Adrenal gland (tissue), 19 donors: ENCODE measurements at regions of chr15 and their contacts with region 1.

Region 1: DNA sequence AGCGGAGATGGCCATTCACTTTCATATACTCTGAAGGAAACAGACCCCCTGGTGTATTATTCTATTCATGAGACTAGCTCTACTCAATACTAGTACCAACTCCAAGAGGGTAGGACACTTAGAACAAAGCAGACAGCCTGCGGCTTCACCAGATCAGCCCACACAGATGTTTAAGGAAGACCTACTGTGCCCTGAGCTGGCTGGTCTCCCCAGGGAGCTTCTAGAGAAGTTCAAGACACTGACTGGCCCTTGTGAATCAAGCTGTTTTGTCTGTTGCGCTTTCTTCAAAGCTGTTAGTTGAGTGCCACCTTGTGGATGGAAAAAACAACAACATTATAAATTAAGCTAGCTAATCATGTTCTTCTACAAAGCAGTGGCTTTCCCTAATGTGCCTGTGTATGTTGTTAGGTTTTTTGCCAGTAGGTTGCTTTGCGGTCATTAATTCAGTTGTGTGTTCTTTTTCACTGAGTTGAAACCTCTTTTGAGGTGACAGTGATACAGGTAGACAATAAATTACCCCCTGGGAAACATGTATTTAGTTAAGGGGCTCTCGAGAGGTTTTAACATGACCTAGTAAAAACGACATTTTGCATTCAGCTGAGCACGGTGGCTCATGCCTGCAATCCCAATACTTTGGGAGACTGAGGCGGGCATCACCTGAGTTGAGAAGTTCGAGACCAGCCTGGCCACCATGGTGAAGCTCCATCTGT is 64.2 kb upstream of the MYZAP start:
- DNase-seq: peak; percentile 42 to 75 (median 59)
- H3K4me3 ChIP-seq: no peak overlapping the region
- H3K27ac ChIP-seq: no peak overlapping the region
- H3K4me1 ChIP-seq: peaks cover 18 to 21% of the 10 kb centered on the region in 2 donors
- H3K27me3 ChIP-seq: no peaks in the 10 kb centered on the region
- CTCF ChIP-seq: peak; percentile 38 to 83 (median 78)
- POLR2A ChIP-seq: no peak

Region 2: DNA sequence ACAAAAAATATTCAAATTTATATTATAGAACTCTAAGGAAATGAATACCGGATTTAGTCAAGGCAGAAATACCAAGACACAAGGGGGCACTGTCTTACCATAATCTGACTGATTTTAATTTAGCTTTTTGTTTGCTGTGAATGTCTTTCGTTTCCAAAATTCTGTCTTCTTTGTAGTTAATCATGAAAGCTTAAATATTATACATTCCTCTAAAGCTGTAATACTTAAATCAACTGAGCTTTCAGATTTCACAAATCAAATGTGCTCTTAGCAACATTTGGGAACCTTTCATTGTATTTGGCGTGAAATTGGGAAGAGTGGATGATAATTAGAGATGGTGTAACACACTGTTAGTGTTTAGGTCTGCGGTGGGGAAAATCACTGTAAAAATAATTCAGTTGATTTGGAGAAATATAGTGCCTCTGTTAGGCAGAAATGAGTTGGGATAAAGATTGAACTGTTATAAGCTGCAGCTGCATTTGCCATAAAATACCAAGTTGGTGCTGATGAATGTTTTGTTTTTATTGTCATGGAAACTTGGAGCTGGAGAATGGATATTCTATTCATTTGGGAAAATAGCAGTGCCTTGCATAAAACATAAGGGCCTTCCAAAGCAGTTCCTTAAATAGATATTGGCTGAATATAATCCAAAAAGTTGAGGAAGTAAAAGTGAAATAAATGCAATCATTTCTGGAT is 380.9 kb before region 1 on chr15:
- intact Hi-C with region 1: loop called in 1 of 2 experiments (anchors 10 kb)
- DNase-seq: peak in 1 of 7 donors; percentile 25
- H3K4me3 ChIP-seq: peak overlapping the region in 1 of 4 donors; percentile 13
- H3K27ac ChIP-seq: peak overlapping the region in 1 of 5 donors; percentile 17
- H3K4me1 ChIP-seq: peaks cover 8 to 35% of the 10 kb centered on the region in 2 donors
- H3K27me3 ChIP-seq: no peaks in the 10 kb centered on the region
- CTCF ChIP-seq: peak; percentile 64 to 84 (median 68)
- POLR2A ChIP-seq: no peak

Region 3: DNA sequence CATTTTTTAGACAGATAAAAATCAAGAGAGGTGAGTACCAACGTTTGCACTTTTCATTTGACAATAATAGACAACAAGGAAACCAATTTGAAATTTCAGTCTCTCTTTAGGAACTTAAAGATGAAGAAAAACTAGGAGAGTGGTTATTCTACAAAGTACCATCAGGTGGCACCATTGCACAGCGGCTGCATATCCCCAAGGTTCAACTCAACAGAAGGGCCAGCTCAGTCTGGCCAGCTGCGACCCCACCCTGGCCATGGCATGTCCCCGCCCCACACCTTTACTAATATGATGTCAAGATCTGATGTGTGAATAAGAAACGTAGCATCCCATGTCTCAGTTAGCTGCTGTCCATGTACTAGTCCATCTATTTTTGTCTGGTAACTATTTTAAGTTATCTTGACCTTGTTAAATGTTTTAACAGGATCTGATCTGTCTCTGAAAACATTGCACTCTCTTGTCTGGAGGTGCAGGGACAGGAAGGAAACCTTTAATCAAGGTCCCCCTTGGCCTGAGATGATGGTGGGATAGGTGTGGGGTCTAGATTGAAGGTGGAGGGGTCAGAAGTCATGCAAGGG is 186.8 kb before region 1 on chr15:
- intact Hi-C with region 1: loop called (anchors 2 to 5 kb)
- DNase-seq: peak in 6 of 7 donors; percentile 43 to 75 (median 58)
- H3K4me3 ChIP-seq: no peak overlapping the region
- H3K27ac ChIP-seq: no peak overlapping the region
- H3K4me1 ChIP-seq: no peaks in the 10 kb centered on the region
- H3K27me3 ChIP-seq: no peaks in the 10 kb centered on the region
- CTCF ChIP-seq: peak; percentile 74 to 95 (median 86)
- POLR2A ChIP-seq: no peak

Region 4: DNA sequence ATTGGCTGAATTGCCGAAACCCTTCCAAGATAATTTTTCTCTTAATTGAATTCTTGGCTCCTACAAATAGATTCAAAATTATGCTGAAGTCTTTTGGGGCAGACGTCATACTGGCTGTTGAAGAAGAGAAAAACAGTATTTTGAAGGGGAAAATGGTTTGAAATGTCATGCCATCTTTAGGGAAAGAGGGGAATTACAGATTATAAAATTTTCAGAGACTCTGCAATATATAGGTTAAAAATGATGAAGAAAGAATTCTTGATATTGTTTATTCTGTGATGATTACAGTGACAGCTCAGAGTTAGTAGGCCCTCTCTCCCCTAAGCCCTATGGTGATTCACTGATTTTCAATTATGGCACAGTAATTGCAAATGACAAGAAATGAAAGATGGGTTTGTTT is 65.2 kb before region 1 on chr15:
- intact Hi-C with region 1: loop called in 1 of 2 experiments (anchors 10 kb)
- DNase-seq: no peak
- H3K4me3 ChIP-seq: no peak overlapping the region
- H3K27ac ChIP-seq: no peak overlapping the region
- H3K4me1 ChIP-seq: no peaks in the 10 kb centered on the region
- H3K27me3 ChIP-seq: no peaks in the 10 kb centered on the region
- CTCF ChIP-seq: peak in 4 of 6 experiments; percentile 20 to 38 (median 32)
- POLR2A ChIP-seq: no peak

Region 5: DNA sequence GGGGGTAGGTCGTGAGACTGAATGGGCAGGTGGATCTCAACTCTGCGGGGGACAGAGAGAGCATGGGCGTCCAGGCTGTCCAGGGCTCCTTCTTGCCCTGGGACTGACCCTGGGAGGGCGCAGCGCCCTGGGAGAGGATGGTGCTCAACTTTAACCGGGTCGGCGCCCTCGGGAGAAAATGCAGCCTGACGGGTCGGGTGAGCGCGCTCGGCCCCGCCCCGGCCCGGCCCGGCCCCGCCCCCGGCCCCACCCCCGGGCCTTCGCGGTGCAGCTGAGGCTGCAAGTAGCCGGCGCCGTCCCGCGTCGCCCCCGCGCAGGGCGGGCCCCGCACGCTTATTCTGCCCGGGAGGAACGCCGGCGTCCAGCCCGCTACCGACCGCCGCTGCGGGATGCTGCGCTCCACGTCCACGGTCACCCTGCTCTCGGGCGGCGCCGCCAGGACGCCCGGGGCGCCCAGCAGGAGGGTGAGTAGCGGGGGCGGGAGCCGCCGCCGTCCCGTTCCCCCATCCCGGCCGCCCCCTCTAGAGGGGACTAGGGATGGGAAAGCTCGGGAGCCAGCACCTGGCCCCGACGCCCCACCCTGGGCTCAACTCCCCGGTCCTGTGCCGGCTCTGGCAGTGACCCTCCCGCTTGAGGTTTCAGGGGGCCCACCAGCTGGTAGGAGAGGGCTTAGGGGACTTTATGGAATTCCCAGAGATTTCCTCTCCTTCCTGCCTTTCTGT is 64.3 kb after region 1 on chr15 and contains the start of gene MYZAP:
- intact Hi-C with region 1: no loop called
- DNase-seq: peak; percentile 56 to 74 (median 67)
- H3K4me3 ChIP-seq: peak within 1 kb of the TSS in 3 of 4 donors; percentile 23 to 91 (median 79)
- H3K27ac ChIP-seq: peak within 1 kb of the TSS in 4 of 5 donors; percentile 60 to 82 (median 76)
- H3K4me1 ChIP-seq: peaks cover 19 to 47% of the 10 kb centered on the region in 2 donors
- H3K27me3 ChIP-seq: no peaks in the 10 kb centered on the region
- CTCF ChIP-seq: no peak
- POLR2A ChIP-seq: peak in 1 of 2 donors; percentile 62
- total RNA-seq, gene MYZAP: 46.2 to 176 (median 74.4) TPM